HEK293T (cell line): ENCODE measurements at regions of chr1 and their contacts with region 1.

Region 1: DNA sequence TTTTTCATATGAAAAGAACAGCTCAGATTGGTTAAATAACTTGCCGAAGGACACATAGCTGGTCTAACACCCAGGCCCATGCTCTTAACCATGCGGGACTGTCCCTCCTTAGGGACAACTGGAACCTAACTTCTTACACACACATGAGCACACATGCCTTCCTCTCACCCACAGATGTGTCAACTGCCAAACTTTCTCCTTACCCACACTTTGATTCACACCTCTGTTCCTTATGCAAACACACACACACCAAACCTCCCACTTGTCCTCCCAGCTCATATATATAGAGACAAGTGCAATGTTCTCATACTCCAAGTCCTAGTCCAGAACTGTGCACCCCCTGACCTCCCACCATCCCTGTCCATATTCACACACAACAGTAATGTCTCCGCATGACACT is 4.3 kb downstream of the RAB25 start:
- DNase-seq: no peak

Region 2: GRCh38 chr1:155706091-155706619 is 359.1 kb before region 1 on chr1:
- CTCF ChIA-PET with region 1: no interaction called
- POLR2A ChIA-PET with region 1: no interaction called
- DNase-seq: no peak

Region 3: DNA sequence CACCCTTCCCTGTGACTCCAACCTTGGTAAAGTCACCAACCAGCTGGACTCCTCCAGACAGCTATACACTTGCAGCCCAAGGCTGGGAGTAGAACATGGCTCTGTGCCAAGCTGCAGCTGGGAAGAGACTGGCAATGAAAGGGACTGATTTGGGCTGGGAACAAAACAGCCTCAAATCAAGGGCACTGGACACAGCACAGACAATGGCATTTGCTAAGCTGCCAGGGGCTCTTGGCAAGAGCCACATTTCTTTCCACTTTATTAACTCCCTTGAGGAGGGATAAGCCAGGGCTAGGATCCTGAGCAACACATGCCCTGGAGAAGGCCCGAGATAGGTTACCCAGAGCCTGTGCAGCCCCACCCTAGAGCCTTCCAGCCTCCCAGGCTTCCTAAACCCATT is 193.8 kb before region 1 on chr1:
- CTCF ChIA-PET with region 1: no interaction called
- POLR2A ChIA-PET with region 1: no interaction called
- DNase-seq: no peak

Region 4: DNA sequence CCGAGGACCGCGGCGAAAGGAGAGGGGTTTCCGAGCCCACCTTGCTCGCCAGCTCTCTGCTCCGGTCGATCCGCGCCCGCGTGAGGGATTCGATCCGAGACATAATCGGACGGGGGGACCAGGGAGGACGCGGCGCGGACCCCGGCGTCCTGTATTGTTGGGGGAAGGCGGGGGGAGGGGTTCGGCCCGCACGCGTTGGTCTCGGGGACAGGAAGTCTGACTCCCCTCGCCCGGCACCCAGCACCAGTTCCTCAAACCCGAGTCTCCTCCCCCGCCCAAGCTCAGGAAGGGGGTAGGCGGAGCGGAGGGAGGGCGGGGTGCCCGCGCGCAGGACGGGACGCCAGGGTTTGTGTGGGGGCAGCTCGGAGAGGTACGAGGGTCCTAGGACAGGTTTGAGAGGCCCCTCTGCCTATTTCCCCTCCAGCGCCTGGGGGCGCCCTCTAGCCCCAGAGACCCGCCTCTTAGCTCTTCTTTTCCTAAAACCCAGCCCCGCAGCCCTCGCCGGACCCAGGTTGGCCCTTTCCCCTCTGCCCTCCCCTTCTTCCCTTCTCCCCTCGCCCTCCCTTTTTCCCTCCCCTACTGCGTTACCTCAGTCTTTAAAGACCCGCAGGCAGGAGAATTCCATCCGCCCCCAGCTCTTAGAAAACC is 86.8 kb before region 1 on chr1 and contains the start of gene ARHGEF2:
- CTCF ChIA-PET with region 1: interaction called, 14 read pairs
- POLR2A ChIA-PET with region 1: no interaction called
- DNase-seq: peak; percentile 80

Region 5: GRCh38 chr1:156020292-156021089 is 44.7 kb before region 1 on chr1 and contains the start of gene SSR2:
- CTCF ChIA-PET with region 1: interaction called, 18 read pairs
- POLR2A ChIA-PET with region 1: interaction called, 6 read pairs
- DNase-seq: peak; percentile 98

Region 6: DNA sequence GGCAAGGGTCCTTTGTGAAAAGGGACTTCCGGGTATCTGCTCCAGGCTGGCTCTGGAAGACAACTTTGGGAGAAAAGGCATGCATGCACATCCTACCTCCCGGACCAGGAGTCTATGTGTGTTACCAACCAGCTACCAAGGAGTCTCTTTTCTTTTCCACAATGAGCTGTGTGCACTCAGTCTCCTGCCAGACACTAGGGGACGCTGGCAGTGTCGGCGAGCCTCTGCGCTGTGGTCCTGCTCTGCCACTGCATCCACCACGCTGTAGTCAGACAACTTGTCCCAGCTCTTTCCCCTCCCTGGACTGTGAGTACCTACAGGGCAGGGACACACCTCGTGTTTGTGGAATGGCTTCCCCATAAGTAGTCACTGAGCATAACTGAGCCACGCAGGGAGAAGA is 39.3 kb before region 1 on chr1:
- CTCF ChIA-PET with region 1: interaction called, 18 read pairs
- POLR2A ChIA-PET with region 1: interaction called, 6 read pairs
- DNase-seq: peak; percentile 91

Region 7: DNA sequence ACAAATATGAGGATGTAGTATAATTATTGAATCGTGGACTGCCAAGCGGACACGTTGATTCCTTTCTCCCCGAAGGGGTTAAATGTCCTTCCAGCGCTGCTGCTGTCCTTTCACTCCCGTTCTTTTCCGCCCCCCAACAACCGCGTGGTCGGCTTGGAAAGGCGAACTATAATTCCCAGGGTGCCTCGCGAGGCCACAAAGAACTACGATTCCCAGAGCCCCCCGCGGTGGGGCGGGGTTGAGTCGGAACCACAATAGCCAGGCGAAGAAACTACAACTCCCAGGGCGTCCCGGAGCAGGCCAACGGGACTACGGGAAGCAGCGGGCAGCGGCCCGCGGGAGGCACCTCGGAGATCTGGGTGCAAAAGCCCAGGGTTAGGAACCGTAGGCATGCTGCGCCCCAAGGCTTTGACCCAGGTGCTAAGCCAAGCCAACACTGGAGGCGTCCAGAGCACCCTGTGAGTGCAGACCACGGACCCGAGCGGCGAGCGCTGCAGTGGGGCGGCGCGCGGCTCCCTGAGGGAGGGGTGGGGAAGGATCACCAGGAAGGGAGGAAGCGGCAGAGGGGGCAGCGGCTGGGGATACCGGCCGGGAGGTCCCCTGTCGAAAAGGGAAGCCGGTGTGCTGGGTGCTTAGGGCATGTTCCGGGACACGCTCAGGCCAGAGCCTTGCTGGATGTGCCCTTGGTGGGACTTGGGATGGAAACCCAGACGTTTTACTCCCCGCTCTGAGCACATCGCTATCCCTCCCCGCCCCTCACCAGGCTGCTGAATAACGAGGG is 10.5 kb before region 1 on chr1 and contains the start of gene LAMTOR2:
- CTCF ChIA-PET with region 1: interaction called, 13 read pairs
- POLR2A ChIA-PET with region 1: interaction called, 4 read pairs
- DNase-seq: peak; percentile 97

Region 8: GRCh38 chr1:156104065-156104810 is 39.0 kb after region 1 on chr1:
- CTCF ChIA-PET with region 1: no interaction called
- POLR2A ChIA-PET with region 1: no interaction called
- DNase-seq: no peak

Region 9: GRCh38 chr1:156114101-156114916 is 49.1 kb after region 1 on chr1 and contains the start of gene LMNA:
- CTCF ChIA-PET with region 1: no interaction called
- POLR2A ChIA-PET with region 1: no interaction called
- DNase-seq: peak; percentile 87